GM10248 (cell line): ENCODE measurements at regions of chr15 and their contacts with region 1.

Region 1: DNA sequence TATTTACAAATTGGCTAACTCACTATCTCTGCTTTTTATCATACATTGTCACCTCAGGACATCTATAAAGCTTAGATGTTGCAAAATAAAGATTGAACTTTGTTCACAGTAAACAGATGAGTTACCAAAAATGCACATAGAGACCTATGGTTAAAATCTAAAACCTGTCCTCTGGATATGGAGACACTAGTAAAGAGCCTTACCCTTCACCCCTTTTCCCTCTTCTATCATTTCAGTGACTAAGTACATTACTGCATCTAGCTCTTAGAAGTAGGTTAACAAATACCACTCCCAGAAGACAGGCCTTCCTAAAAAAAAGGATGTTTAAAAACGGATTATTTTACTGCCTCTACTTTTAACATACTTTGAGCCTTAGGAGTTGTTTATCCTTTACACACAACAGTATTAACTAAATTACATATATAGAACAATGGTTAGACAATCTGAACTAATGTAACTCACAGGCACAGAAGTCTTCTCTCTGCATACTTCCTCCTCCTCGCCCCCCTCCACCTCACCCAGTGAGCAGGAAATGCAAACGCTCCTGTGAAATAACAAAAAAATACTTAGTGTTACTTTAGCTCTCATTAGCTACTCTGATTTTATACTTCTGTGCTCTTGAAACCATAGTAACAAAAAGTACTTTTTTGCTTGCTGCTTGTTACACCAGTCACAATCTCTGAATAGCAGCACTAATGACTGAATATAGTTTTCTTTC is 23.3 kb downstream of the IREB2 start:
- DNase-seq: no peak
- CTCF ChIP-seq: no peak

Region 2: GRCh38 chr15:78449220-78449999 is 11.9 kb before region 1 on chr15:
- CTCF ChIA-PET with region 1: interaction called, 10 read pairs
- POLR2A ChIA-PET with region 1: interaction called, 4 read pairs
- DNase-seq: no peak
- CTCF ChIP-seq: no peak